Activated CD4-positive, alpha-beta T cell treated with anti-CD3 and anti-CD28 coated beads for 36 hours (primary cell): ENCODE measurements at regions of chr6 and their contacts with region 1.

Region 1: DNA sequence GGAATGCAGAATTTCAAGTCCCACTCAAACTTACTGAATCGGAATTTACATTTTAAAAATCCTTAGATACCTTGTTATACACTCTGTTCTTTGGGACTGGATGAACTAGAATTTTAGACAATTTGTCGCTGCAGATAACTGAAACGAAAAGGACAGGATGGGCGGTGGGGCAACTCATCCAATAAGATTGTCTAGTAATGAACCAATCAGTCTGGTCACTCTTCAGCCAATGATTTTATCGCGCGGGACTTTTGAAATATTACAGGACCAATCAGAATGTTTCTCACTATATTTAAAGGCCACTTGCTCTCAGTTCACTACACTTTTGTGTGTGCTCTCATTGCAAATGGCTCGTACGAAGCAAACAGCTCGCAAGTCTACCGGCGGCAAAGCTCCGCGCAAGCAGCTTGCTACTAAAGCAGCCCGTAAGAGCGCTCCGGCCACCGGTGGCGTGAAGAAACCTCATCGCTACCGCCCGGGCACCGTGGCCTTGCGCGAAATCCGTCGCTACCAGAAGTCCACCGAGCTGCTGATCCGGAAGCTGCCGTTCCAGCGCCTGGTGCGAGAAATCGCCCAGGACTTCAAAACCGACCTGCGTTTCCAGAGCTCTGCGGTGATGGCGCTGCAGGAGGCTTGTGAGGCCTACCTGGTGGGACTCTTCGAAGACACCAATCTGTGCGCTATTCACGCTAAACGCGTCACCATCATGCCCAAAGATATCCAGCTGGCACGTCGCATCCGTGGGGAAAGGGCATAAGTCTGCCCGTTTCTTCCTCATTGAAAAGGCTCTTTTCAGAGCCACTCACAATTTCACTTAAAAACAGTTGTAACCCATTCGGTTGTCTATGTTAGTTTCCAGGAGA is 41.9 kb upstream of the HFE start:
- DNase-seq: peak; percentile 83
- ATAC-seq: peak; percentile 63
- H3K4me3 Mint-ChIP-seq: peak overlapping the region; percentile 79
- H3K27ac Mint-ChIP-seq: peak overlapping the region; percentile 99
- H3K4me1 Mint-ChIP-seq: peaks cover 18% of the 10 kb centered on the region
- H3K27me3 Mint-ChIP-seq: no peaks in the 10 kb centered on the region

Region 2: GRCh38 chr6:25866011-25866410 is 179.3 kb before region 1 on chr6:
- CTCF ChIA-PET with region 1: no interaction called
- POLR2A ChIA-PET with region 1: no interaction called
- intact Hi-C with region 1: no loop called
- DNase-seq: peak; percentile 8
- ATAC-seq: peak; percentile 66
- H3K4me3 Mint-ChIP-seq: no peak overlapping the region
- H3K27ac Mint-ChIP-seq: no peak overlapping the region
- H3K4me1 Mint-ChIP-seq: peaks cover 16% of the 10 kb centered on the region
- H3K27me3 Mint-ChIP-seq: no peaks in the 10 kb centered on the region

Region 3: GRCh38 chr6:27864906-27865849 is 1819.9 kb after region 1 on chr6:
- CTCF ChIA-PET with region 1: no interaction called
- POLR2A ChIA-PET with region 1: interaction called, 5 read pairs
- intact Hi-C with region 1: loop called in 1 of 2 experiments (anchors 5 kb)
- DNase-seq: peak; percentile 86
- ATAC-seq: peak; percentile 57
- H3K4me3 Mint-ChIP-seq: peak overlapping the region; percentile 94
- H3K27ac Mint-ChIP-seq: peak overlapping the region; percentile 99
- H3K4me1 Mint-ChIP-seq: peaks cover 40% of the 10 kb centered on the region
- H3K27me3 Mint-ChIP-seq: no peaks in the 10 kb centered on the region